ENCODE measurements at regions of chr1 and their contacts with region 1.

Region 1: DNA sequence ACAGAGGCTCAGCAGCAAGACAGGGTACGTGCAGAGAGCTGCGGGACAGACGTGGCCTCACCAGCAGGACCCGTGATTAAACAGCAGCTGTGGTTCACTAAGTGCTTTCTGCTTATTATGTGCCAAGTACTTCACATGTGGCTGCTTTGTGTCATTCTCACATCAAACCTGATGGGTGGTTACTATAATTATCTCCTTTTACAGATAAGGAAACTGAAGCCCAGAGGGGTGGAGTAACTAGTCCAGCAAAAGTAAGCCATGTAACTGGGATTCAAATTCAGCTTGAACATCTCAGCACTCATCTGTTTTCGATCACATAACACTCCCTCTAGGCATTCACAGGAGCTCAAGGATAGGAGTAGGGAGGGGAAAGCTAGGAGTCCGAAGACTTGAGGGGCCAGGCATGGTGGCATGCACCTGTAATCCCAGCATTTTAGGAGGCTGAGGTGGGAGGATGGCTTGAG is 50.8 kb upstream of the CLIC4 start:
- DNase-seq: peak; percentile 80
- ATAC-seq: peak; percentile 91

Region 2: DNA sequence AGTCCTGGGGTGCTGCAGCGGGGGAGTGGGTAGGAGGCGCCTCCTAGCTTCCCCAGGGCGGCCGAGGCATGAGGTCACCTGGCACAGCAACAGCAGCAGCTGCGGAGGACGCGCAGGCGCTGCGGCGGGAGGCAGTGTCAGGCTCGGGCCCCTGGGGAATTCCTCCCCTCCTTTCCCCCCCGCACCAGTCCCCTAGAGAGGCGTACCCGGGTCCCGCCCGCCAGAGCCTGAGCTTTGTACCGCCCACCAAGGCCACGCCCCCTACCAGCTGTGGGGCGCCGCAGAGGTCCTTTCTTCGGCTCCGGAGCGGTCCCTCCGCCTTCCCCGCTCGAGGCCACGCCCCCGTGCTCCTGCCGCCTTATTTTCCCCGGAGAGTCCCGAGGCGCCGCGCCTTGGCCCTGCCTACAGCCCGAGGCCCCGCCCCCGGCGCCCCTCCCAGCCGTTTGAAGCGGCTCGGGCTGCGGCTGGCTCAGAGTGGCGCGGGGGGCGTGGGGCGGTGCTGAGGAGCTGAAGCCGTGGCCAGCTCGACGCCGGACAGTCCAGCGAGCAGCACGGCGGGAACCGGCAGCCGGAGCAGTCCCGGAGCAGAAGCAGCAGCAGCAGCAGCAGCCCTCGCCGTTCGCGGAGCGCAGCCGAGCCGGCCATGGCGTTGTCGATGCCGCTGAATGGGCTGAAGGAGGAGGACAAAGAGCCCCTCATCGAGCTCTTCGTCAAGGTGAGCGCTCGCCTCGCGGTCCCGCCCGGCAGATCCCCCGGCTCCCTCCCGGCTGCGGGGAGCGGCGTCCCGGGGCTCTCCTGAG is 50.7 kb after region 1 on chr1 and contains the start of gene CLIC4:
- intact Hi-C with region 1: loop called (anchors 5 kb)
- DNase-seq: peak; percentile 100
- ATAC-seq: peak; percentile 94
- total RNA-seq, gene CLIC4: 358 TPM

Measured in left ventricle myocardium superior (tissue), 1 donor.